Prostate gland (tissue), 2 donors: ENCODE measurements at regions of chr22 and their contacts with region 1.

Region 1: DNA sequence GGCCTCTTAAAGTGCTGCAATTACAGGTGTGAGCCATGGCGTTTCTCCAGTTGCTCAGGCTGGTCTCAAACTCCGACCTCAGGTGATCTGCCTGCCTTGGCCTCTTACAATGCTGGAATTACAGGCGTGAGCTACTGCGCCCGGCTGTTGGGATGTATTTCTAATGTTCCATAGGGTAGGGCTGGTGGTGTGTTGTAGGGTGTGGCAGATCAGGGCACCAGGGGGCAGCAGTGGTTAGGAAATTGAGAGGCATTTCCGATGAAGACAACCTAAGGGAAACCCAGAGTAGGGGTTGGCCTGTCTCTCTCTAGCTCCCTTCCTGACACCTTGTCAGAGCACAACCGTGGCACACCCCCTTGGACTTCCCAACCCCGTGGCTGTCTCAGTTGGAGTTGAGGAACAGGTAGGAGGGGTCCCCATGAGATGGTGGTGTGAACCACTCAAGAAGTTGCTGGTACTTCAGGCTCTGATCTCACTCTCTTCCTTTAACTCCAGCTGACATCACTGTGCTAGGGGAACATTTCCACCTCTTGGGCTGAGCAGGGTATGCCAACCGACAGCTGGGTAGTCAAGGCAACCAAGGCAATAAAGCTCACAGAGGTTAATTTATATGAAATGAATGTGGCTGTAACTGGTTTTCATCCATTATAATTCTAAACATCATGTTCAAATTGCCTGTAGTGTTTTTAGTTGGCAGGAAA is 33.0 kb downstream of the YWHAH start:
- DNase-seq: peak; percentile 78
- H3K4me3 ChIP-seq: no peak overlapping the region
- H3K27ac ChIP-seq: no peak overlapping the region
- H3K4me1 ChIP-seq: no peaks in the 10 kb centered on the region
- H3K27me3 ChIP-seq: no peaks in the 10 kb centered on the region
- CTCF ChIP-seq: peak; percentile 62 to 85 (median 78)
- POLR2A ChIP-seq: no peak

Region 2: GRCh38 chr22:32080904-32081303 is 103.6 kb after region 1 on chr22:
- intact Hi-C with region 1: loop called (anchors 5 kb)
- DNase-seq: peak; percentile 40
- H3K4me3 ChIP-seq: no peak overlapping the region
- H3K27ac ChIP-seq: no peak overlapping the region
- H3K4me1 ChIP-seq: no peaks in the 10 kb centered on the region
- H3K27me3 ChIP-seq: no peaks in the 10 kb centered on the region
- CTCF ChIP-seq: peak in 3 of 4 experiments; percentile 62 to 86 (median 78)
- POLR2A ChIP-seq: no peak

Region 3: GRCh38 chr22:32103658-32104315 is 126.5 kb after region 1 on chr22:
- intact Hi-C with region 1: no loop called
- DNase-seq: no peak
- H3K4me3 ChIP-seq: no peak overlapping the region
- H3K27ac ChIP-seq: peak overlapping the region in 1 of 2 donors; percentile 12
- H3K4me1 ChIP-seq: no peaks in the 10 kb centered on the region
- H3K27me3 ChIP-seq: no peaks in the 10 kb centered on the region
- CTCF ChIP-seq: peak in 3 of 4 experiments; percentile 39 to 67 (median 55)
- POLR2A ChIP-seq: no peak

Region 4: GRCh38 chr22:32265882-32266767 is 288.8 kb after region 1 on chr22:
- intact Hi-C with region 1: loop called (anchors 5 kb)
- DNase-seq: peak; percentile 65
- H3K4me3 ChIP-seq: no peak overlapping the region
- H3K27ac ChIP-seq: no peak overlapping the region
- H3K4me1 ChIP-seq: no peaks in the 10 kb centered on the region
- H3K27me3 ChIP-seq: no peaks in the 10 kb centered on the region
- CTCF ChIP-seq: peak; percentile 13 to 74 (median 68)
- POLR2A ChIP-seq: no peak